ENCODE measurements at regions of chr1 and their contacts with region 1.

Region 1: GRCh38 chr1:111214074-111214801 is 13.3 kb upstream of the CHI3L2 start:
- DNase-seq: peak; percentile 45
- H3K4me3 Mint-ChIP-seq: peak overlapping the region; percentile 66
- H3K27ac Mint-ChIP-seq: peak overlapping the region; percentile 95
- H3K4me1 Mint-ChIP-seq: peaks cover 72% of the 10 kb centered on the region
- H3K27me3 Mint-ChIP-seq: peaks cover 3% of the 10 kb centered on the region

Region 2: DNA sequence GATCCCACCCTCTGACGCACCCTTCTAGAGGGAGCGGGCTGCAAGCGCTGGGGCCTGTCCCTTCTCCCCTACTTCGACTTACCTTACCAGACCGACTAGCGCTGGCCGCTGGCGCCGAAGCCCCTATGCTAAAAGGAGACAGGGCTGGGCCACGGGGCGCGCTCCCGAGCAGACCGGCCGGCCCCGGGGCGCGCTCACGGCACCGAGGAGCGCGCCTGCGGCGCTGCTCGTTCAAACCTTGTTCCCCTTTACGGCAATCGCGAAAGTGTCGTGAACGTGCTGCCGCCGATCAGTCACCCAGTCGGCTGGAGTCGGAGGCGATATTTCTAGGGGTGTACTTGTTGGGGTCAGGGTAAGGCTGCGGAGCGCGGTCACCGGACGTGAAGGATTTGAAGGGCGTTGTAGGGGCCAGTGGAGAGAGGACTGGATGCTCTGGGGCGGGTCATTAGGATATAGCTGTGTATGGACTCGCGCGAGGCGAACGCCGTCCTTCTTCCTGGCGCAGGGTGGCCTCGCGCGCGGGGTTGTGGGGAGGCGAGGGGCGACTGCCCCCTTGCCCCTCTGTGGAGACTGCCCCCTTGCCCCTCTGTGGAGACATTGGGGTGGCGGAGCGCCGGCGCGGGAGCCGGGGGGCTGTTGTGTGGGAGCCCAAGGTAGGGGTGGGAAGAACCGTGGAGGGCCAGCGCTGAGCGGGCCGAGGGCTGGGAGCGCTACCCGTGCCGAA is 74.1 kb before region 1 on chr1 and contains the starts of genes CEPT1 and DRAM2:
- CTCF ChIA-PET with region 1: no interaction called
- POLR2A ChIA-PET with region 1: interaction called, 8 read pairs
- intact Hi-C with region 1: loop called (anchors 2 kb)
- DNase-seq: peak; percentile 95
- H3K4me3 Mint-ChIP-seq: peak within 1 kb of the TSS; percentile 92
- H3K27ac Mint-ChIP-seq: peak within 1 kb of the TSS; percentile 88
- H3K4me1 Mint-ChIP-seq: peaks cover 34% of the 10 kb centered on the region
- H3K27me3 Mint-ChIP-seq: no peaks in the 10 kb centered on the region
- total RNA-seq, gene CEPT1: 23.9 to 28.8 TPM
- total RNA-seq, gene DRAM2: 30.1 to 30.5 TPM

Region 3: DNA sequence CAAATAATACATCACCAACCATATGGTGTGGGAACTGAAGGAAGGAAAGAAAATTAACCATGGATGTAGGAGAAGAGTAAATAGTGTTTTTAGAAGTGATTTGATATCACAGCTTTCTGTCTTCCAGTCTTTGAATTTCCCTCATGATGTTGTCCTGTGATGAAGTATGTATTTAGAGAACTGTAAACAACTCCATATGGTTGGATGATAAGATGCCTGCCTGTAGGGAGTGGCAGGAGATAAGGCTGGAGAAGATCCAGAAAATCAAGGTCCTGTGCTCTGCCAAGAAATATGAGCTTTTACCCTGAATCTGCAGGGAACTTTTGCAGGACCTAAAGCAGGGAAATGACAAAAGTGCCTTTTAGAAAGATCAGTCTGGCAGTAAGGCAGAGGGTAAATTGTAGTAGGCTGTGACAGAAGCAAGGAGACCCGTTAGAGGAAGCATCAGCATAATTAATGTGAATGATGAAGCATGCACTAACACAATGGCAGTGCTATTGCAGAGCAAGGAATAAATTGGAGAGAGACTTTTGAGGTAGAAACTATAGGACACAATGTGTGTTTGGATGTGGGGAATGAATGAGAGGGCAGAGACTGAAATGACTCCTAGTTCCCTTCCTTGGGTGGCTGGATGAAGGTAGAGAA is 52.3 kb before region 1 on chr1:
- CTCF ChIA-PET with region 1: no interaction called
- POLR2A ChIA-PET with region 1: no interaction called
- intact Hi-C with region 1: no loop called
- DNase-seq: no peak
- H3K4me3 Mint-ChIP-seq: no peak overlapping the region
- H3K27ac Mint-ChIP-seq: no peak overlapping the region
- H3K4me1 Mint-ChIP-seq: peaks cover 9% of the 10 kb centered on the region
- H3K27me3 Mint-ChIP-seq: no peaks in the 10 kb centered on the region

Region 4: DNA sequence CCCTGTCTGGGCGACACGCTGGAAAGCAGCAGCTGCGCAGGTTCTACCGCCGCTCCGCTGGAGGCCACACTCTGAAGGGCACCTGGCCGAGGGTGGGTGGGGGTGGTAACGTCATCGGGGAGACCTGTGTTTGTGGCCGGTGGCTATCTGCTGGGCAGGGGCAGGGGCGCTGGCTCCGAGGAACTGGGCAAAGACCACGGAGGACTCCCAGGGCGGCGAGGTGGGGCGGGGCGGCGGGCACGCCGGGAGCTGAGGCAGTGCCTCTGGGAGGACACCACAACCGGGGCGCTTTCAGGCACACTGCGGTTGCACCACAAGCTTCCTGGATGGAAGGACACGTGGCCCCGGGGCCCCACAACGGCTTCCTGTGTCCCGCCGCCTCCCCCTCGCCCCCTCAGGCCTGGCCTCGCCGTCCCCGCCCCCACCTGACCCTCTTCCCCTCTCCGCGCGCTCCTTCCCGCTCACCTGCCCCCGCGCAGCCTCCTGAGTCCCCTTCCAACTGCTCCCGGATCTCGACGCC is 10.5 kb before region 1 on chr1:
- CTCF ChIA-PET with region 1: interaction called, 143 read pairs
- POLR2A ChIA-PET with region 1: interaction called, 256 read pairs
- intact Hi-C with region 1: loop called (anchors 1 kb)
- DNase-seq: peak; percentile 93
- H3K4me3 Mint-ChIP-seq: peak overlapping the region; percentile 92
- H3K27ac Mint-ChIP-seq: peak overlapping the region; percentile 97
- H3K4me1 Mint-ChIP-seq: peaks cover 38% of the 10 kb centered on the region
- H3K27me3 Mint-ChIP-seq: no peaks in the 10 kb centered on the region

Measured in activated CD4-positive, alpha-beta memory T cell treated with anti-CD3 and anti-CD28 coated beads for 36 hours (primary cell).